ENCODE measurements at regions of chr4 and their contacts with region 1.

Region 1: GRCh38 chr4:68349649-68350360 is at the start of gene YTHDC1:
- DNase-seq: peak; percentile 90
- H3K4me3 Mint-ChIP-seq: peak within 1 kb of the TSS; percentile 91
- H3K27ac Mint-ChIP-seq: peak within 1 kb of the TSS; percentile 96
- H3K4me1 Mint-ChIP-seq: peaks cover 36% of the 10 kb centered on the region
- H3K27me3 Mint-ChIP-seq: peaks cover 12% of the 10 kb centered on the region
- total RNA-seq, gene YTHDC1: 75.6 and 82.3 TPM in 2 replicates

Region 2: DNA sequence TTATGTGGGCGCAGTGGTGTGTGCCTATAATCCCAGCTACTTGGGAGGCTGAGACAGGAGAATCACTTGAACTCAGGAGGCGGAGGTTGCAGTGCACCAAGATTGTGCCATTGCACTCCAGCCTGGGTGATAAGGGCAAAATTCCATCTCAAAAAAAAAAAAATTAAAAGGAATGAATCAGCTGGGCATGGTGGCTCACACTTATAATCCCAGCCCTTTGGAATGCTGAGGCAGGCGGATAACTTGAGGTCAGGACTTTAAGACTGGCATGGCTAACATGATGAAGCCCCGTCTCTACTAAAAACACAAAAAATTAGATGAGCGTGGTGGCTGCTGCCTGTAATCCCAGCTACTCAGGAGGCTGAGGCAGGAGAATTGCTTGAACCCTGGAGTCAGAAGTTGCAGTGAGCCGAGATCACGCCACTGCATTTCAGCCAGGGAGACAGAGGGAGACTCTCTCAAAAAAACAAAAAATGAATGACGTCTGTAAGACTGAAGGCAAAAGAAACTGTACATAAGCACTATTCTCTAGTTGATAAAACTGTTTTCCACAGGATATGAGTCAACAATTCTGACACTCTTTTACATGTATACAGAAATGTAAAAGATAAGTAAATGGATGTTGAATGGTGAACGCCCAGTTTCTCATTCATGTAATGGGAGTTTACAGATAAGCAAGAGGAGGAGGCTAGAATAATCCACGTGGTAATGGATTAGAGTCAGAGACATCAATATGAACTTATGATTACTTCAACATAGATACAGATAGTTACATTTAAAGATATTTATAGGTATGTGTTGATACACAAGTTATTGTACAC is 826.7 kb before region 1 on chr4:
- intact Hi-C with region 1: loop called (anchors 5 kb)
- DNase-seq: no peak
- H3K4me3 Mint-ChIP-seq: peak overlapping the region; percentile 19
- H3K27ac Mint-ChIP-seq: peak overlapping the region; percentile 92
- H3K4me1 Mint-ChIP-seq: peaks cover 65% of the 10 kb centered on the region
- H3K27me3 Mint-ChIP-seq: no peaks in the 10 kb centered on the region

Region 3: DNA sequence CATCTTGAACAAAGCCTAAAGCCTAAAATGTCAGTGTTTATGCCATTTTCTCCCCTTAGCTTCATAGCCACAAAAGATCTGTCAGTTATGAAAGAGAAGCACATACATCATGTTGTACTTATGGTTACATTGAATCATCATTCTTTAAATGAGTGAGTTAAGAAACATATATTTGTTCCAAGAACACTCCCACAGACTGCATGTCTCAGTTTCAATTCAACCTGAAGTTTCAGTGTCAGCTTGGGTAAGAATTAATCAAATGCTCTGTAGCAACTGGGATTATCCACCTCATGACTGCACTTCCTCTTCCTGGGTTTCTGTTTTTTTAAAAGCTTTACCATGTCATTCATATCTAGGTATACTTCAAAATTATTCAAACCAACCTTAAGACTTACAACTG is 100.4 kb before region 1 on chr4:
- intact Hi-C with region 1: loop called (anchors 1 kb)
- DNase-seq: no peak
- H3K4me3 Mint-ChIP-seq: peak overlapping the region; percentile 23
- H3K27ac Mint-ChIP-seq: peak overlapping the region; percentile 87
- H3K4me1 Mint-ChIP-seq: peaks cover 13% of the 10 kb centered on the region
- H3K27me3 Mint-ChIP-seq: no peaks in the 10 kb centered on the region

Region 4: GRCh38 chr4:68271851-68272756 is 77.7 kb before region 1 on chr4:
- intact Hi-C with region 1: loop called (anchors 1 kb)
- DNase-seq: no peak
- H3K4me3 Mint-ChIP-seq: no peak overlapping the region
- H3K27ac Mint-ChIP-seq: no peak overlapping the region
- H3K4me1 Mint-ChIP-seq: peaks cover 13% of the 10 kb centered on the region
- H3K27me3 Mint-ChIP-seq: peaks cover 12% of the 10 kb centered on the region

Region 5: GRCh38 chr4:68324519-68325262 is 25.1 kb before region 1 on chr4:
- intact Hi-C with region 1: loop called (anchors 2 kb)
- DNase-seq: no peak
- H3K4me3 Mint-ChIP-seq: no peak overlapping the region
- H3K27ac Mint-ChIP-seq: no peak overlapping the region
- H3K4me1 Mint-ChIP-seq: peaks cover 1% of the 10 kb centered on the region
- H3K27me3 Mint-ChIP-seq: no peaks in the 10 kb centered on the region

Region 6: DNA sequence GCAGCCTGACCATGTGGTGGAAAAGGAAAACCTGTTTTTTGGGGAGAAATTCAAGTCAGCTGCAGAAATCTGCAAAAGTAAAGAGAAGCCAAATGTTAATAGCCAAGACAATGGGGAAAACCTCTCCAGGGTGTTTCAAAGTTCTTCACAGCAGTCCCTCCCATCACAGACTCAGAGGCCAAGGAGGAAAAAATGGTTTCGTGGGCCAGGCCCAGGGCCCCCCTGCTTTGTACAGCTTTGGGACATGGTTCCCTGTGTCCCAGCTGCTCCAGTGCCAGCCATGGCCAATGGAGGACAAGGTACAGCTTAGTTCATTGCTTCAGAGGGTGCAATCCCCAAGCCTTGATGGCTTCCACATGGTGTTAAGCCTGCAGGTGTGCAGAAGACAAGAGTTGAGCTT is 15.3 kb after region 1 on chr4:
- intact Hi-C with region 1: no loop called
- DNase-seq: no peak
- H3K4me3 Mint-ChIP-seq: no peak overlapping the region
- H3K27ac Mint-ChIP-seq: no peak overlapping the region
- H3K4me1 Mint-ChIP-seq: peaks cover 1% of the 10 kb centered on the region
- H3K27me3 Mint-ChIP-seq: peaks cover 10% of the 10 kb centered on the region

Region 7: GRCh38 chr4:68375667-68376559 is 26.1 kb after region 1 on chr4:
- intact Hi-C with region 1: loop called (anchors 1 kb)
- DNase-seq: peak; percentile 38
- H3K4me3 Mint-ChIP-seq: peak overlapping the region; percentile 65
- H3K27ac Mint-ChIP-seq: no peak overlapping the region
- H3K4me1 Mint-ChIP-seq: peaks cover 23% of the 10 kb centered on the region
- H3K27me3 Mint-ChIP-seq: peaks cover 30% of the 10 kb centered on the region